Astrocyte of the spinal cord (primary cell): ENCODE measurements at regions of chr17 and their contacts with region 1.

Region 1: GRCh38 chr17:78736526-78737079 is 45.5 kb downstream of the CYTH1 start:
- DNase-seq: no peak
- H3K4me3 ChIP-seq: no peak overlapping the region
- CTCF ChIP-seq: no peak

Region 2: DNA sequence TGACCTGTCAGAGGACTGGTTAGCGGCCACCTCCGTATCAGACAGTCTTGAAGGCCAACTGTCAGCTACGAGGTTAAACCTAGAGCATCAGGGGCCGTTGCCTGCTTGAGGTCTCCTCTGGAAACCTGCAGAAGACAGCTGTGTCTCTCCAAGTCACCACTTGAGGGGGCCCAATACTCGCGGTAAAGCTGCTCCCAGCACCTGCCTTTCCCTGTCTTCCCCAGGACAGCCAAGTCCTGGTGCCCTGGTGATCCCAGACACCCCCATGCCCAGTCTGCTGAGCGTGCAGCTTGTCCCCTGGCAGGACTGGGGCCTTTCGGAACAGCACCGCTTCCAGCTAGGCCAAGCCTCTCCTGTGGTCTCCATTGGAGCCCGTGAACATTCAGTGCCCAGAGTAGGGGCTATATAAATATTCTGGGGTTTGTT is 239.5 kb before region 1 on chr17:
- in situ Hi-C with region 1: loop called (anchors 25 kb)
- DNase-seq: peak; percentile 71
- H3K4me3 ChIP-seq: no peak overlapping the region
- CTCF ChIP-seq: peak; percentile 79

Region 3: DNA sequence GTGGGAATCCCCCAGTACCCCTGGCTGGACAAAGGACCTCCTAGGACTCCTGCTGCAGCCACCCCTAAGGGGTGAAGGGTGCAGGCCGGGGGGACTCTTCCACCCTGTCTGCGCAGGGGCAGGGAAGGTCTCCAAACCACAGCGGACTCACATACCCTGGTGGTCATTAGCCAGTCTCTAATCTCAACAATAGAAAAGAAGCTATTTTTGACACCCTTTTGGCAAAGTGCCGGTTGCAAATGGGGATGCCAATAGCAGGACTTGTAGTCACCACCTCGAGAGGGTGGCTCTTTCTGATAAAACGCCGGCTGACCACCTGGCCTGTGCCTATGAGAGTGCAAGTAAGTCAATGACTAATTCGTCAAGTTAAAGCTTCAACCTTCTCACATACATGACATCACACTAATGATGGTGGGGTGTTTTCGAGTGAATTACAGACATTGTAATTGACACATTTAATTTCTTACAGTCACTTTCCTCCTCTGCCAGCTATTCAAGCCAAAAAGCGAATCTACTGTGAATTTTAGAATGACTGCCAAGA is 136.4 kb before region 1 on chr17:
- in situ Hi-C with region 1: no loop called
- DNase-seq: peak; percentile 74
- H3K4me3 ChIP-seq: no peak overlapping the region
- CTCF ChIP-seq: no peak